ENCODE measurements at regions of chr4 and their contacts with region 1.

Region 1: GRCh38 chr4:144174401-144175067 is 34.0 kb upstream of the GYPA start:
- DNase-seq: peak; percentile 10
- H3K4me3 Mint-ChIP-seq: no peak overlapping the region
- H3K27ac Mint-ChIP-seq: peak overlapping the region; percentile 24
- H3K4me1 Mint-ChIP-seq: peaks cover 15% of the 10 kb centered on the region
- H3K27me3 Mint-ChIP-seq: peaks cover 6% of the 10 kb centered on the region

Region 2: DNA sequence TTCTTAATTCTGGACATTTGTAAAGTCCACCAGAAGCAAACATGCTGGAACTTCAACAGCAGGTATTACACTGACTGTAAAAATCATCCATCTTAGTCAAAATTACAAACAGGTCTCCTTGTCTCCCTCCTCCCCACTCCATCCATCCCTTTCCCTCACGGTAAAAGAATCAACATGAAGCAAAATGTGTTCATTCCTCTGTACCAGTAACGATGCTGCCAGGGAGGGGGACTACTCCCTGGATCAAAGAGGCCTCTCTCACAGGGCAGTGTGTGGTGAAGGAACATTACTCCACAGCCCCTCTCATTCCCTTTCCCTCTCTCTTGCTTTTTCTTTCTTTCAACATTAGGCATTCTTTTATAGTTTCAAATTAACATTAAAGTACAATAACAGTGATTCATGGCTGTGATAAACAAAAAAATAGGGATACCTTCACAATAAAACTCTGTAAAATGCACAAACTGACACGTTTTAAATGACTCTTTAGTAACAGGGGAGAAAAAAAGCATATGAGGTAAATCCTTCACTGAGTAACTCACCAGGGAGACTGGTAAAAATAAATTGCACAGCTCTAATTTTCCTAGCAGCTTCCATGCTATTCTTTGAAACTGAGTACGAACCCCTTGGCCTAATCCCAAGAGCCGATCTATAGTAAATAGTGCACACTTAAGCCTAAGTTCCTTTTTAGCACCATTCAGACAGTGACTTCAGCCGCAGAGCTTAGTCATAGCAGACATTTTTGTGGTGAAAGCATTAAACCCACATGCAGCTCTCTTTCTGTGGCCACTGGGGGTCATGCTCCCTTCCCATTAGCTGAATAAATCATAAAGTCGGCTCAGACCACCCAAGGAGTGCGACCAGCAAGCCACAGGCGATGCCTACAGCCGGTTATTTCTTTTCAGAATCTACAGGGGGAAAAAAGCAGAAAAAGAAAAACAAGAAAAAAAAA is 181.5 kb after region 1 on chr4:
- intact Hi-C with region 1: loop called (anchors 5 kb)
- DNase-seq: peak; percentile 9
- H3K4me3 Mint-ChIP-seq: no peak overlapping the region
- H3K27ac Mint-ChIP-seq: no peak overlapping the region
- H3K4me1 Mint-ChIP-seq: peaks cover 10% of the 10 kb centered on the region
- H3K27me3 Mint-ChIP-seq: peaks cover 22% of the 10 kb centered on the region

Region 3: DNA sequence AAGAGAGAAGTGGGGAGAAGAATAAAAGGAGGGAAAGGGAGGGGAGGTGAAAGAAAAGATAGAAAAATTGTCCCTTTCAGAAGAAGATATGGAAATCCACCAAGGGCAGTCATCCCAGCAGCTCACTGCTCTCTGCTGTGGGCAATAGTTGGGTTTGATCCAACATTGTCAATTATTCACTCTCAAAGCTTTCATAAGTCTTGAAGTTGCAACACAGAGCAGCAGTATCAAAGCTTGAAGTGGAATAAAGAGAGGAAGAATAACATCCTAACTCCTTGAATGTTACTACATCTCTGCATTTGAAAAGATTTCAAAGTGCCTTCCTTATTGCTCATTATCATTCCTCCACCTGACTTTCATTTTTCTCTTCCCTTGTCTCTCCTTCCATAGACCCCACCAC is 409.1 kb after region 1 on chr4:
- intact Hi-C with region 1: loop called (anchors 10 kb)
- DNase-seq: no peak
- H3K4me3 Mint-ChIP-seq: no peak overlapping the region
- H3K27ac Mint-ChIP-seq: no peak overlapping the region
- H3K4me1 Mint-ChIP-seq: no peaks in the 10 kb centered on the region
- H3K27me3 Mint-ChIP-seq: peaks cover 1% of the 10 kb centered on the region

Region 4: GRCh38 chr4:144645631-144646522 is 471.3 kb after region 1 on chr4 and contains the start of gene HHIP:
- intact Hi-C with region 1: loop called (anchors 5 kb)
- DNase-seq: peak; percentile 13
- H3K4me3 Mint-ChIP-seq: peak within 1 kb of the TSS; percentile 83
- H3K27ac Mint-ChIP-seq: no peak within 1 kb of the TSS
- H3K4me1 Mint-ChIP-seq: peaks cover 19% of the 10 kb centered on the region
- H3K27me3 Mint-ChIP-seq: peaks cover 59% of the 10 kb centered on the region
- total RNA-seq, gene HHIP: not detected in 2 replicates

Region 5: DNA sequence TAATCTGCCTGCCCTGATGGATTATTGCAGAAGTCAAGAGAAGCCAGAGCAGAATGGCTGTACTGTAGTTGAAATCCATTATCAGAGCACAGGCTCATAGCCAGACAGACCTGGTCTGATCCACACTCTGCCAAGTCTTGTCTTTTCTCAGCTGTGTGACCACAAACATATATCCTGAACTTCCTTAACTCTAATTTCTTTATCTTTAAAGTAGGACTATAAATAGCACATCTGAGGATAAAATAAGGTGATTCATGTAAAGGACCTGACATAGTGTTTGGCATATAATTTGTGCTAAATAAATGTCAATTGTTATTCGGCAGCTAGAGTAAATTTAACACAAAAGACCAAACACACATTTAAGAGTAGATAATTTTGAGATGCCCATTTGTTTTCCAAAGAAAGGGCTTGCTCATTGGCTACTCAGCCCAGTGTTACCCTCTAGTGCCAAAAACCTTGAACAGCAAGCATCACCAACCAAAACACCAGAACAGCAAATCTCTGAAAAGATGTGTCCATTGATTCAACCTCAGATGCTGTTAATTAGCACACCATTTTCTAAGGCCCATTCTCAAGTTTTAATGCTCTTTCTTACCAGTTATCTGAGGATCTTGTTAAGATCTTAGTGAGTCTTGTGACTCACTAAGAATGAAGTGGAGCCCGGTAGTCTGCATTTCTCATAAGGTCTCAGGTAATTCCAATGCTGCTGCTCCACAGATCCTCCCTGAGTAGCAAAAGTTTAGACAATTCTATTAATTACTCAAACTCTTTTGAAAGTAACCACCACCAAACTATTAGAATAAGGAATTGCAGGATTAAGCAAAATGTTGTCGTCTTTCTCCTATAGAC is 580.3 kb after region 1 on chr4:
- intact Hi-C with region 1: no loop called
- DNase-seq: no peak
- H3K4me3 Mint-ChIP-seq: no peak overlapping the region
- H3K27ac Mint-ChIP-seq: no peak overlapping the region
- H3K4me1 Mint-ChIP-seq: no peaks in the 10 kb centered on the region
- H3K27me3 Mint-ChIP-seq: no peaks in the 10 kb centered on the region

Region 6: DNA sequence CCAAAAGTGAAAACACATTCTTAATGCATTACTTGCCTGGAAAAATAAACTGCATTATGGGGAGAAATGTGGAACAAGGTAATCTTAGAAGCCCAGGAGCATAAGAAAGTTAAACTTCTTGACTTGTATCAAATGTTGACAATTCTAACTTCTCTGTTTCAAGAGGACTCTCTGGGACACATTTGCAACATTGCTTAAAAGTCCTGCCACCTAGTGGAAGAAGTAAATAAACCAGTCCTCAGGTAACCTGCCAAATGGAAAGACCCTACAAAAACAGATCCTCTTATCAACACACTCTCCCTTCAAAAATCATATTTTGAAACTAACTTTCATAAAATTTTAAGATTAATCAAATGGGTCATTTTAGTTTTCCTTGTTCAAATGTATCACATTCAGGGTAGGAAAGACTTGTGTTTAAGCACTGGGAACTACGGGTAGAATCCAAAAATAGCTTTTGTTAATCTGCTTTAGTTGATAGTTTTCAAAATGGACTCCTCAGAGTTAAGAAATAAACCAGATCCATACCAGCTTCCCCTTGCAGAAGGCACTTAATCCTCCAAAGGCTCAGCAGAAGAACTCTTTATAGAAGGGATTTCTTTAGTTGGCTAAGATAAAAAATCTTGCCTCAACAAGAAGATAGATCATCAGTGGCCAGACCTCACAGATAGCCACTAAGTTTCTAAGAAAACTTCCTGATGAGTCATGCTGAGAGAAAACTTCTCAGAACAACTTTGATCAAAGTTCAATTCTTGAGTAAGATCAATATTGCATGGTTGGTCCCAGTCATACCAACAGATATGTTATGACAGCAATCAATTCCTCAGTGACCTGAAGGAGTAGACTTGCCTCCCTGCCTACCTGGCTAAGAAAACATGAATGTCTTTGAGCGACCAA is 613.1 kb after region 1 on chr4:
- intact Hi-C with region 1: loop called (anchors 5 kb)
- DNase-seq: no peak
- H3K4me3 Mint-ChIP-seq: no peak overlapping the region
- H3K27ac Mint-ChIP-seq: no peak overlapping the region
- H3K4me1 Mint-ChIP-seq: peaks cover 7% of the 10 kb centered on the region
- H3K27me3 Mint-ChIP-seq: no peaks in the 10 kb centered on the region

Region 7: GRCh38 chr4:145061318-145061920 is 886.9 kb after region 1 on chr4:
- intact Hi-C with region 1: loop called (anchors 1 kb)
- DNase-seq: no peak
- H3K4me3 Mint-ChIP-seq: no peak overlapping the region
- H3K27ac Mint-ChIP-seq: no peak overlapping the region
- H3K4me1 Mint-ChIP-seq: peaks cover 24% of the 10 kb centered on the region
- H3K27me3 Mint-ChIP-seq: no peaks in the 10 kb centered on the region

Region 8: DNA sequence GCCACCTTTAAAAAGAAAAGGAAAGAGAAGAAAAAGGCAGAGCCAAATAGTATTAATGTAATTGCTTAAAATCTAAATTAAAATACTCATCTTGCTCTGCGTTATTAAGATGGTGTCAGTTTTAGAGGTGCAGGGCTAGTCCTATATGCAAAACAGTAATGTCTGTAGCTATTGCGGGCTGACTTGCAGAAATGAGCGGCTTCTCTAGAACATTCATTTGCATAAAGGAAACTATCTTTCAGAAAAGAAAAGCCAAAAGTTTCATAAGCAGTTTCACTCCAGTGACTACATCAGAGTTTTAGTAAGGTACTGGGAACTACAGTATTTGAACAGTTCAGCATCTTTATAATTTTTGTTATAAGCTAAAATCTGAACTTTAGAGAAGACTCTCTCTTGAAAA is 1313.1 kb after region 1 on chr4:
- intact Hi-C with region 1: loop called (anchors 5 kb)
- DNase-seq: no peak
- H3K4me3 Mint-ChIP-seq: peak overlapping the region; percentile 20
- H3K27ac Mint-ChIP-seq: peak overlapping the region; percentile 29
- H3K4me1 Mint-ChIP-seq: peaks cover 17% of the 10 kb centered on the region
- H3K27me3 Mint-ChIP-seq: peaks cover 13% of the 10 kb centered on the region

Measured in activated T-helper 2 cell treated with anti-CD3 and anti-CD28 coated beads, Interferon-gamma antibody, Interleukin-2, Interleukin-4, amounts not matched to agents 10 μg/mL and 5 μg/mL and 100 μg/mL, durations not matched to agents 14 hours and 24 hours and 36 hours (primary cell).